Activated T-helper 2 cell treated with anti-CD3 and anti-CD28 coated beads, Interferon-gamma antibody, Interleukin-2, Interleukin-4, amounts not matched to agents 10 μg/mL and 5 μg/mL and 100 μg/mL, durations not matched to agents 14 hours and 24 hours and 36 hours (primary cell): ENCODE measurements at regions of chr7 and their contacts with region 1.

Region 1: DNA sequence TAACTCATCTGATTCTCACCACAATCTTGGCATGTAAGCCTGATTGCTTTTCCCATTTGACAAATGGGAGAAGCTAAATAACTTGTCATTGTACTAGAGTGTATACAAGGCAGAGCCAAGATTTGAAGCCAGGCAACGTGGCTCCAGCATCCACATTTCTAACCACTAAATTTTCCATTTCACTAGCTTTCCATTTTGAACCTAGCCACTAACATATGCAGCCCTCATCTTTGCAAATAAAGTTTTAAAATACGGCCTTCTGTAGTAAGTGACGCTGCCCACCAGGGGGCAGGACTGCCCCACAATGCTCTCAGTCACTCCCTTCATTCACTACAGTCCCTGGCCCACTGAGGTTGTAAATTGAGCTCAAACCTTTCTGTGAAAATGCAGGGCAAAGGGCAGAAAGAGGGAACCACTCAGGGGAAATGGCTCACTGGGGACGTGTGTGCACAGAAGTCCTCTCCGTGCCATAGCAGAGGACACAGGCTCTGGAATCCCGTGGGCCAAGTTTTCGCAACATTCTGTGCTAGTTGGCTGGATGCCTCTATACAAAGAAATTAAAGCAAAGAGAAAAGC is 315.7 kb downstream of the TNS3 start:
- DNase-seq: peak; percentile 20
- H3K4me3 Mint-ChIP-seq: no peak overlapping the region
- H3K27ac Mint-ChIP-seq: no peak overlapping the region
- H3K4me1 Mint-ChIP-seq: no peaks in the 10 kb centered on the region
- H3K27me3 Mint-ChIP-seq: peaks cover 2% of the 10 kb centered on the region

Region 2: GRCh38 chr7:47337531-47337930 is 71.3 kb after region 1 on chr7:
- intact Hi-C with region 1: loop called (anchors 10 kb)
- DNase-seq: no peak
- H3K4me3 Mint-ChIP-seq: no peak overlapping the region
- H3K27ac Mint-ChIP-seq: no peak overlapping the region
- H3K4me1 Mint-ChIP-seq: no peaks in the 10 kb centered on the region
- H3K27me3 Mint-ChIP-seq: no peaks in the 10 kb centered on the region

Region 3: GRCh38 chr7:47818796-47819606 is 552.8 kb after region 1 on chr7:
- intact Hi-C with region 1: loop called (anchors 1 kb)
- DNase-seq: peak; percentile 14
- H3K4me3 Mint-ChIP-seq: no peak overlapping the region
- H3K27ac Mint-ChIP-seq: no peak overlapping the region
- H3K4me1 Mint-ChIP-seq: no peaks in the 10 kb centered on the region
- H3K27me3 Mint-ChIP-seq: peaks cover 2% of the 10 kb centered on the region